ENCODE measurements at regions of chr11 and their contacts with region 1.

Region 1: GRCh38 chr11:132126973-132127899 is 756.8 kb downstream of the NTM start:
- DNase-seq: peak; percentile 68
- H3K4me3 ChIP-seq: no peak overlapping the region
- CTCF ChIP-seq: peak; percentile 78

Region 2: GRCh38 chr11:131694526-131695424 is 432.5 kb before region 1 on chr11:
- CTCF ChIA-PET with region 1: interaction called, 75 read pairs
- POLR2A ChIA-PET with region 1: interaction called, 3 read pairs
- DNase-seq: no peak
- H3K4me3 ChIP-seq: no peak overlapping the region
- CTCF ChIP-seq: peak; percentile 100

Region 3: DNA sequence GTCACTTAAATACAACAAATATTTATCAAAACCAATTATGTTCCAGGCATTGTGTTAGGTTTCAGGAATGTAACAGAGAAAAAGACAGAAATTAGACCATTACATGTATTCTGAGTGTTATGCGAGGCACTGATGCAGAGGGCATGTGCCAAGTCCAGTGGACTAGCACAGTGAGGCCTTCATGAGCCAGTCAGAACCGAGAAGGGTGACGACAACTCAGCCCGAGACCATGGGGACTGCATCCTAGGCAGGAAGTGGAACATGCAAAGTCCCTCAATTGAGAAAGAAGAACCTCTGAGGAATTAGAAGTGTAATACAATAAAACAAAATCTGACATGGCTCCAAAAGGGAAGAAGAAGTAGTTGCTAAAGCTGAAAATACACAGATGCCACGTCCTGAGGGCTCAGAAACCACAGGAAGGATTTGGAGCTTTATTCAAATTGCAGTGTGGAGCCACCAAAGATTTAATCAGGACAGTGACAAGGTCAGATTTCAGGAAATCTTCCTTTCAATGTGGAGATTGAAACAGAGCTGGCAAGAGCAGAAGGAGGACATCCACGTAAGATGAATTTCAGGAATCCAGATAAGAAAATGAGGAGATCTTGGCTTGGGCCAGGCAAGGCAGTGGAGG is 227.2 kb before region 1 on chr11:
- CTCF ChIA-PET with region 1: interaction called, 12 read pairs
- POLR2A ChIA-PET with region 1: no interaction called
- DNase-seq: no peak
- H3K4me3 ChIP-seq: no peak overlapping the region
- CTCF ChIP-seq: no peak

Region 4: DNA sequence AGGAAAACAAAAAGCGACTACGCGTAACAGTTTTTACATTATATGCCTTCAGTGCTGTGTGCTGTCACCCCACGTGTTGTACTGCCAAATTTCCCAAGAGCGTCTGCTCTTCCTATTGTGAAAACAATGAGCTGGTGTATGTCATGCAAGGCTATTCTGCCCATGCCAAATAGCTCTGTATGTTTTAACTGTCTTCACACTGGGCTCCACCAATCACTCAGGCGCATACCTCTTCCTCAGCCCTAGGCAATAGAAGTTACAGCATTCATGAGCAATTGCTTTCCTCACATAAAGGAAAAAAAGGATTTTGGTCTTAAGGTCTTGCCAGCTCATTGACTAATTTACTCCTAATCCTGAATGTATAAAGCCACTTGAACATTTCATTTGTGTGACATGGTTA is 150.0 kb before region 1 on chr11:
- CTCF ChIA-PET with region 1: interaction called, 11 read pairs
- POLR2A ChIA-PET with region 1: no interaction called
- DNase-seq: peak; percentile 47
- H3K4me3 ChIP-seq: no peak overlapping the region
- CTCF ChIP-seq: no peak

Region 5: DNA sequence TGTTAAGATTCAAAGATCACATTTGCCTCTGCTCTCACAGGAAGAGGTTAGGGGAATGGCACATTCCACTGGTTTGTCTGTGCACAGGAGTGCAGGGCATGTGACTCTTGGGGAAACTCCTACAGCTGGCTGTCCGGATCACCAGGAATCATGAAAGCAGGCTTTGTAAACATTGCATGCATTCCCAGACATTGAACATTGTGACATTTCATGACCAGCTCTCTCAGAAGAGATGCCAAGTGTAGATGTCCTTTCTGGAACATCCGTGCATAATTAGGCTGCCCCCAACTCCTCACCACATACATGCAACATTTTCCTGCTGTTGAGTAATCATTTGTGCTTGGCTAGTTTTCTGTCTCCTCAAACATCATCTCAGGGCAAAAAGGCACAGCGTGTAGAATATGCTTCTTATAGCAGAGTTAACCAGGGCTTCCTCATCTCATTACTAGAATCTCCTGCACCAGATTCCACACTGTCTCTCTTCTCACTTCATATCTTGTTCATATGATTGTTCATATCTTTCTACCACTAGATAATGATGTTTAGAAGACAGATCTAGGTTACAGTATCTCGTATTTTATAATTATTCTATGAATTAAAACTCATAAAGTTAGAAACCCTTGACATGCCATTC is 62.1 kb before region 1 on chr11:
- CTCF ChIA-PET with region 1: interaction called, 13 read pairs
- POLR2A ChIA-PET with region 1: interaction called, 5 read pairs
- DNase-seq: peak; percentile 100
- H3K4me3 ChIP-seq: no peak overlapping the region
- CTCF ChIP-seq: no peak

Region 6: GRCh38 chr11:132106096-132106982 is 20.9 kb before region 1 on chr11:
- CTCF ChIA-PET with region 1: interaction called, 19 read pairs
- POLR2A ChIA-PET with region 1: interaction called, 6 read pairs
- DNase-seq: no peak
- H3K4me3 ChIP-seq: no peak overlapping the region
- CTCF ChIP-seq: no peak